ENCODE measurements at regions of chr6 and their contacts with region 1.

Region 1: DNA sequence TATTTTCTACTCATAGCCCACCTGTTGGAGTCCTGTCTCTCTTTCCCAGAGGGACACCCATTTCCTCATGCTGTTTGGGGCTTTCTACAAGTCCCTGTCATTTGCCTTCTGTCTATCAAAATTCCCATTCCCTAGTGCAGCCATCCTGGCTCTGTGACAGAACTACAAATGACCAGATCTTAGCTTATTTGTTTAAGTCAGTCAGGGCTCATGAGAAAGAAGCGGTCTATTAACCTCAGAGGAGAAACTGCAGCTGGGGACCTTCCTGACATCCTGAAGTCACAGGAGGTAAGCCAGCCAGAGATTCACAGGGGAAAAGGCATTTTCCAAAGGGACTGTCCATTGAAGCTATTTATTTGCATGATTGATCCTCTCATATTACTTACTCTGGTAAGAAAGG is 1.7 kb upstream of the COL9A1 start:
- DNase-seq: no peak
- H3K4me3 ChIP-seq: no peak overlapping the region
- H3K27ac ChIP-seq: no peak overlapping the region
- H3K4me1 ChIP-seq: no peaks in the 10 kb centered on the region
- H3K27me3 ChIP-seq: no peaks in the 10 kb centered on the region
- CTCF ChIP-seq: no peak
- EP300 ChIP-seq: no peak
- POLR2A ChIP-seq: no peak

Region 2: GRCh38 chr6:70894001-70894400 is 589.4 kb after region 1 on chr6:
- intact Hi-C with region 1: loop called (anchors 10 kb)
- DNase-seq: no peak
- H3K4me3 ChIP-seq: no peak overlapping the region
- H3K27ac ChIP-seq: no peak overlapping the region
- H3K4me1 ChIP-seq: no peaks in the 10 kb centered on the region
- H3K27me3 ChIP-seq: no peaks in the 10 kb centered on the region
- CTCF ChIP-seq: no peak
- EP300 ChIP-seq: no peak
- POLR2A ChIP-seq: no peak